Cardiac septum (tissue), 1 donor: ENCODE measurements at regions of chr3 and their contacts with region 1.

Region 1: GRCh38 chr3:31981206-31982181 is at the starts of genes OSBPL10 and ZNF860:
- DNase-seq: peak; percentile 94
- total RNA-seq, gene OSBPL10: 5.8 TPM
- total RNA-seq, gene ZNF860: 0.16 TPM

Region 2: DNA sequence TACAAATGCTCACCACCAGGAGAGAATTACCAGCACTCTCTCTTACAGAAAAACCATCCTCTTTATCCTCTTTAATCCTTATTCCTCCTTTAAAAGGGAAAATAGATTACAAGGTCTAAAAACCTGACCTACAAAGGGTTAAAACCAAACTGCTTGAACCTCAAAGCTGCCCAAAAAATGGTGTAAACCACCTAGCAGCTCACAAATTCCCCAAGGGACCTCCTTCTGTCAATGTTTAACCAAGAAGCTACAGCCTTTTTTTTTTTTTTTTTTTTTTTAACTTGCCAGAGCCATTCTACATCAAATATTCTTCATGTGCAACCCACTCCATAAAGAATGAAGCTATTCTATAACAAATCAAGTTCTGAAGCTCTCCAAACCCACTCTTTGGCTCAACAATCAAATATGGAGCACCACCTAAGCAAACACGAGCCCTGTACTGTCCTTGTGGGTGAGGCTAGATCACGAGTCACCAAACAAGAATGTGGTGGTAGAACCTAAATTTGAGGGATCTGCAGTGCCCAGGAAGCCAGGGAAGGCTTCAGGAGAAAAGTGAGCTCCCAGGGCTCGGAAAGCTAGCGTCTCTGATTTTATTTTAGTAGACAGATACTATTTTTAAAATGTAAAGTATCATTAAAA is 20.6 kb before region 1 on chr3:
- intact Hi-C with region 1: loop called (anchors 2 kb)
- DNase-seq: no peak

Region 3: DNA sequence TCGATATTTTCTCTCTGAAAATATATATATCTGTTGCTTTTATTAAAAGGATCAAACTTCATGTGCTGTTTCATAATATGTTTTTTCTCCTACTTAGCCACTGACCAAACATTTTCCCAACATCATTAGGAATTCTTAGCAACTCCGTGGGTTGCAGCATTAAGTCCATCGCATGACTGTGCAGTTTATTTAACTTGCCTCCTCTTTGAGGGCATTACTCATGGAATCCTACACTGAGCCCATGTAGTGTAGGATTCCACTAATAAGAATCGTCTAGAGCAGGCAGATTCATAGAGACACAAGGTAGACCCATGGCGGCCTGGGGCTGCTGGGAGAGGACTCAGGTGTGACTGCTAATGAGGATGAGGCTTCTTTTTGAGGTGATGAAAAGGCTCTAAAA is 471.9 kb after region 1 on chr3:
- intact Hi-C with region 1: no loop called
- DNase-seq: no peak